Calu3 (cell line): ENCODE measurements at regions of chr9 and their contacts with region 1.

Region 1: GRCh38 chr9:20811872-20812271 is 127.8 kb downstream of the FOCAD start:
- DNase-seq: no peak
- H3K4me3 Mint-ChIP-seq: no peak overlapping the region
- H3K27ac Mint-ChIP-seq: no peak overlapping the region
- H3K4me1 Mint-ChIP-seq: no peaks in the 10 kb centered on the region
- H3K27me3 Mint-ChIP-seq: no peaks in the 10 kb centered on the region
- CTCF ChIP-seq: no peak

Region 2: GRCh38 chr9:20552874-20553575 is 258.8 kb before region 1 on chr9:
- CTCF ChIA-PET with region 1: no interaction called
- intact Hi-C with region 1: no loop called
- DNase-seq: no peak
- H3K4me3 Mint-ChIP-seq: peak overlapping the region; percentile 30
- H3K27ac Mint-ChIP-seq: peak overlapping the region; percentile 35
- H3K4me1 Mint-ChIP-seq: peaks cover 50% of the 10 kb centered on the region
- H3K27me3 Mint-ChIP-seq: no peaks in the 10 kb centered on the region
- CTCF ChIP-seq: no peak

Region 3: DNA sequence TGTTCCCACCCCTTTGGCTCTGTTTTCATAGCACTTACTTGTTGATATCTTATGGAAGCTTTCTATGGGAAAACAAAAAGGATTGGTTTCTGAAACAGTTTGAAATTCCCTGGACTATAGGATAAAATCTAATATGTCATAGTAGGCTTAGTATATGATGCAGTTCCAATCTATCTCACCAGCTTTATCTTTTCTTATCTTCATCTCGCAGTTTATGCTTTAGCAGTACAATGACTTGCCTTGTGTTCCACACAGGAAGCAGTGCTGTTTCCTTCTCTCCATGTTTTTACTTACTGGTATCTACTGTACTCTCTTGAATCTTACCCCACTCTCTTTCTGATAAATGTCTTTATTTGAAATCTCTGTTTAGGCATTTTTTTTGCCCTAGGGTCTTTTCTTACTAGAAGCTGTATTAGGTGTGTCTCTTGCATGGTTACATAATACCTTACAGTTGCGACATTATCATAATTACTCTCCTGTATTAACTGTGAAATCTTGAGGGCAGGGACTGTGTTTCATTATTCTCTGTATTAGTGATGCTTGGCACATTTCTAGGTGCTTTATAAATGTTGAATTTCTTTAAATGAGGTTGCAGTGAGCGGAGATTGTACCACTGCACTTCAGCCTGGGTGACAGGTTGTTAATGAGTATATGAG is 51.5 kb before region 1 on chr9:
- CTCF ChIA-PET with region 1: no interaction called
- intact Hi-C with region 1: loop called (anchors 10 kb)
- DNase-seq: no peak
- H3K4me3 Mint-ChIP-seq: no peak overlapping the region
- H3K27ac Mint-ChIP-seq: no peak overlapping the region
- H3K4me1 Mint-ChIP-seq: peaks cover 26% of the 10 kb centered on the region
- H3K27me3 Mint-ChIP-seq: no peaks in the 10 kb centered on the region
- CTCF ChIP-seq: no peak